SK-N-SH (cell line): ENCODE measurements at regions of chr3 and their contacts with region 1.

Region 1: DNA sequence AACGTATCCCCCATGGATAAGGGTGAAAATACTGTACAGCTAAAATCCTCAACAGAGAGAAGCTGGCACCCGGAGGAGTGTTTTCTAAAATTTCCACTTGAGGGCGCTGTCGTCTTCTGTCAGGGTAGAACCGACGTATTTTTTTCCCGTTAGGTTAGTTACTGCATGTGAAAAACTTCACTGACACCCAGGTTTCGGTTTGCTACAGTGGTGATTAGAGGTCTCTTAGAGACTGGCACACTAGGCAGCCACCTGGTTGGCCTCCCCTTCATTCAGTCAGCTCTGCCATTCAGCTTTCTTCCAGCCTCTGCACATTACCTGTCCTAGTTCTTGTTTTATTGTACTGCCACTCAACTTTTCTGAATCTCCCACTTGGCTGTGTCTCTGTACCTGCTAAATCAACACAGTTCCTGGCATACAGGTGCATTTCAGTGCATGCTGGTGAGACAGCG is 18.4 kb downstream of the CCK start:
- DNase-seq: peak; percentile 58
- H3K4me3 ChIP-seq: peak overlapping the region in 1 of 2 experiments; percentile 39; a peak in 1 of 4 replicates
- H3K27ac ChIP-seq: no peak overlapping the region
- H3K4me1 ChIP-seq: no peaks in the 10 kb centered on the region; a peak in 1 of 4 replicates
- H3K27me3 ChIP-seq: peaks cover 16% of the 10 kb centered on the region; the same call in 1 of the 2 replicates
- CTCF ChIP-seq: peak; percentile 76
- EP300 ChIP-seq: no peak
- RAD21 ChIP-seq: peak; percentile 90

Region 2: DNA sequence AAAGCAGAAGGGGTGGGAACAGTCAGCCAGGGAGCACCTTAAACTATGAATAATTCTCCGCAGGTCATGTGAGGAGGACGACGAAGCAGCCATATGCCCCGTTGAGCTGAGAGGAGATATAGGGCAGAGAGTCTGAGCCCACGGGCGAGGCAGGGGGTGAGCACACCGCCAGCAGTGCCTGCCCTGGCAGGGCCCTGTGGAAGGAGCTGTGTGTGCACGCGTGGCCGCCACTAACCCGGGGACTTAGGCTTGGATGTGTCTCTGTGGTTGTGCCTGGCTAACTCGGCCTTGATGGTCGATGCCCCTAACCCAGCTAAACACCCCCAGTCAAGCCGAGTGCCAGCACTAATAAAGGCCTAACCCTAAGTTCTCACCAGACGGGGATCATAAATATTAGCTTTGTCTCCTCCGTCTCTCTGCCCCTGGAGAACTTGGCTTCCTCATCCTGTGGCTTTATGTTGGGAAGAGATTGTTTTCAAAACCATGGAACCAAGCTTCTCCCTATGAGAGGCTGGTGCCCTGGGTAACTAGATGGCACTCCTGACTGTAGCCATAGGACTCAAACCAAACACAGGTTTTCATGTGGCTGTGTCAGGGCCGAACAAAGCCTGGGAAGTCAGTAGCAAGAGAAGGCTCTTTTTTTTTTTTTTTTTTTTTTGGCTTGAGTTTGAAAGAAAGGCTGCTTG is 27.0 kb before region 1 on chr3:
- CTCF ChIA-PET with region 1: interaction called, 10 read pairs
- POLR2A ChIA-PET with region 1: no interaction called
- DNase-seq: no peak
- H3K4me3 ChIP-seq: no peak overlapping the region
- H3K27ac ChIP-seq: no peak overlapping the region
- H3K4me1 ChIP-seq: no peaks in the 10 kb centered on the region
- H3K27me3 ChIP-seq: no peaks in the 10 kb centered on the region
- CTCF ChIP-seq: no peak
- EP300 ChIP-seq: no peak
- RAD21 ChIP-seq: no peak

Region 3: DNA sequence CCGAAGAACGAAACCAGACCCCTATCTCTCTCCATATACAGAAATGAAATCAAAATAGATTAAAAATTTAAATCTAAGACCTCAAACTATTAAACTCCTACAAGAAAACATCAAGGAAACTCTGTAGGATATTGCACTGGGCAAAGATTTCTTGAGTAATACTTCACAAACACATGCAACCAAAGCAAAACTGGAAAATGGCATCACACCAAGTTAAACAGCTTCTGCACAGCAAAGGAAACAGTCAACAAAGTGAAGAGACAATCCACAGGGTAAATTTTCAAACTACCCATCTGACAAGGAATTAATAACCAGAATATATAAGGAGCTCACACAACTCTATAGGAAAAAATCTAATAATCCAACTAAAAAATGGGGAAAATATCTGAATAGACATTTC is 11.0 kb before region 1 on chr3:
- CTCF ChIA-PET with region 1: interaction called, 20 read pairs
- POLR2A ChIA-PET with region 1: no interaction called
- DNase-seq: no peak
- H3K4me3 ChIP-seq: no peak overlapping the region
- H3K27ac ChIP-seq: no peak overlapping the region
- H3K4me1 ChIP-seq: no peaks in the 10 kb centered on the region
- H3K27me3 ChIP-seq: no peaks in the 10 kb centered on the region
- CTCF ChIP-seq: no peak
- EP300 ChIP-seq: no peak
- RAD21 ChIP-seq: no peak

Region 4: GRCh38 chr3:42273361-42273760 is 25.8 kb after region 1 on chr3:
- CTCF ChIA-PET with region 1: interaction called, 14 read pairs
- POLR2A ChIA-PET with region 1: no interaction called
- DNase-seq: no peak
- H3K4me3 ChIP-seq: no peak overlapping the region
- H3K27ac ChIP-seq: no peak overlapping the region
- H3K4me1 ChIP-seq: peaks cover 0 to 8% of the 10 kb centered on the region in 2 experiments; a peak in 1 of 4 replicates
- H3K27me3 ChIP-seq: 0 out of 2 replicates have a peak, but pooled peaks cover under 1% of the 10 kb centered on the region
- CTCF ChIP-seq: no peak
- EP300 ChIP-seq: no peak
- RAD21 ChIP-seq: no peak

Region 5: DNA sequence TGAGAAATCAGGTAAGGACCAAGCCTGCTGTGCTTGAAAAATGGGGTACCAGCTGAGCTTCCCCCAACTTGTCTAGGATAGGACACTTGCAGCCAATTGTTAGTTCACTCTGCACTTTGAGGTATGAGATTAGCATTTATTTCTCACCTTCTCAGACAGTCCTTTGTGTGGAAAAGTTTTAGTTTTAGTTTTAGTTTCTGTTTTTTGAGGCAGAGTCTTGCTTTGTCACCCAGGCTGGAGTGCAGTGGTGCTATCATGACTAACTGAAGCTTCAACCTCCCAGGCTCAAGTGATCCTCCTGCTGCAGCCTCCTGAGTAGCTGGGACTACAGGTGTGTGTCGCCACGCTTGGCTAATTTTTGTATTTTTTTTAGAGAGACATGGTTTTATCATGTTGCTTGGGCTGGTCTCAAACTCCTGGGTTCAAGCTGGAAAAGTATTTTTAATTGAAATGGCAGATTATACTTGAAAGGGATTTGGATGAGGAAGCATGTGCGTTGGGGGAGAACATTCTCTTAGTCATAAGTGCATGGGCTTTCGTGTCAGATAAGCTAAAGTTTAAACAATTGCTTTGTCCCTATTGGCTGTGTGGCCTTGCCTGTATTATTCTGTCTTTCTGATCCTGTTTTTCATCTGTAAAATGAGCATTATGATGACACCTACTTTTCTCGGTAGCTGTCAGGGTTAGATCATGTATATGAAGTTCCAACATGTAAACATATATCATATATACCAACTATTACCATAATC is 43.5 kb after region 1 on chr3:
- CTCF ChIA-PET with region 1: no interaction called
- POLR2A ChIA-PET with region 1: no interaction called
- DNase-seq: no peak
- H3K4me3 ChIP-seq: no peak overlapping the region
- H3K27ac ChIP-seq: no peak overlapping the region
- H3K4me1 ChIP-seq: no peaks in the 10 kb centered on the region
- H3K27me3 ChIP-seq: no peaks in the 10 kb centered on the region
- CTCF ChIP-seq: no peak
- EP300 ChIP-seq: no peak
- RAD21 ChIP-seq: no peak

Region 6: DNA sequence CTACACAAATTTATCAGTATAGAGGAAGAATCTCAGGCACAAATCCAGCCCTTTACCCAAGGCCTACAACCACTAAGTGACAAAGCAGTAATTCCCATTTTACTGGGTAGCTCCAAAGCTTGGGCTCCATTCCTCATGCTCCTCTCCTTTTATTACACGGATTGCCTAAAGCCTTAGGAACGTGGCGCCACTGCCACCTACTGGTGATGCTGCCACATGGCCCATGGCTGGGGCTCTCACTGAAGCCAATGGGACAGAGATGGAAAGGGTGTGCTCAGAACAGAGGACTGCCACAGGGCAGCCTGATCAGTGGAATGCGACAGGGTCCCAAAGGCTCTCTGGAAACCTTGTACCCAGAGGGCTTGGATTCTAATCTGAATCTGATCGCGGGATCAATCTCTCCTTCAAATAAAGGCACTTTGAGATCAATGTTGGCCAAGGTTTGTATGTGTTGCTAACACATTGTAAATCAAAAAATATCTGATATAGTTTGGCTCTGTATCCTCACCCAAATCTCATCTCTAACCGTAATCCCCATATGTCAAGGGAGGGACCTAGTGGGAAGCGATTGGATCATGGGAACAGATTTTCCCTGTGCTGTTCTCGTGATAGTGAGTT is 196.3 kb after region 1 on chr3:
- CTCF ChIA-PET with region 1: interaction called, 169 read pairs
- POLR2A ChIA-PET with region 1: no interaction called
- DNase-seq: peak; percentile 85
- H3K4me3 ChIP-seq: peak overlapping the region in 1 of 2 experiments; percentile 42; a peak in 1 of 4 replicates
- H3K27ac ChIP-seq: no peak overlapping the region
- H3K4me1 ChIP-seq: peaks cover 0 to 5% of the 10 kb centered on the region in 2 experiments; a peak in 1 of 4 replicates
- H3K27me3 ChIP-seq: peaks cover 5% of the 10 kb centered on the region; the same call in 1 of the 2 replicates
- CTCF ChIP-seq: peak; percentile 96
- EP300 ChIP-seq: no peak
- RAD21 ChIP-seq: peak; percentile 97

Region 7: GRCh38 chr3:42535981-42536790 is 288.6 kb after region 1 on chr3:
- CTCF ChIA-PET with region 1: interaction called, 10 read pairs
- POLR2A ChIA-PET with region 1: no interaction called
- DNase-seq: peak; percentile 50
- H3K4me3 ChIP-seq: no peak overlapping the region
- H3K27ac ChIP-seq: no peak overlapping the region
- H3K4me1 ChIP-seq: peaks cover 0 to 3% of the 10 kb centered on the region in 2 experiments; a peak in 1 of 4 replicates
- H3K27me3 ChIP-seq: peaks cover 3% of the 10 kb centered on the region; the same call in 1 of the 2 replicates
- CTCF ChIP-seq: peak; percentile 48
- EP300 ChIP-seq: no peak
- RAD21 ChIP-seq: peak; percentile 13; the same call in 1 of the 2 replicates